ENCODE measurements at regions of chr7 and their contacts with region 1.

Region 1: DNA sequence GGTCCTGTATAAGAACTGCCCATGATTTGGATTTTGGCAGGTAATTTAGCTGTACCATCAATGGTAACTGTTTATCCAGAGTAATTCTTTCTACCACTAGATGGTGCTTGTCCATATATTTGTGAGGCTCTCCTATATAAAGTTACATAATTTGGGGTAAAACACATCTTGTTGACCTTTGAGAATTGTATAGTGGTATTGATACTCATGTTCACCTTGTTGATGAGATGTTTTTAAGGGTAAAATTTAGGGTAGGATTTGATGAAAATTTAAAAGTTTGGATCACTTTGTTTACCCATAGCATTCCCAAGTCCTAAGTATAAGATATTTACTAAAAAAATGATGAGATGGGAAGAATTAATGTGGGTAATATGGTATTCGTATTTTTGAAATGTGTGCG is 31.6 kb downstream of the ST7 start:
- DNase-seq: no peak
- ATAC-seq: peak; percentile 55; the same call in 1 of the 2 replicates
- H3K4me3 Mint-ChIP-seq: no peak overlapping the region
- H3K27ac Mint-ChIP-seq: no peak overlapping the region
- H3K4me1 Mint-ChIP-seq: 0 out of 2 replicates have a peak, but pooled peaks cover 3% of the 10 kb centered on the region
- H3K27me3 Mint-ChIP-seq: no peaks in the 10 kb centered on the region
- CTCF ChIP-seq: peak; percentile 42; the same call in 1 of the 2 replicates

Region 2: GRCh38 chr7:116971869-116972268 is 13.0 kb before region 1 on chr7:
- CTCF ChIA-PET with region 1: interaction called, 11 read pairs
- POLR2A ChIA-PET with region 1: interaction called, 3 read pairs
- DNase-seq: peak; percentile 21
- ATAC-seq: peak; percentile 61; the same call in 1 of the 2 replicates
- H3K4me3 Mint-ChIP-seq: no peak overlapping the region
- H3K27ac Mint-ChIP-seq: peak overlapping the region; percentile 76
- H3K4me1 Mint-ChIP-seq: peaks cover 55% of the 10 kb centered on the region
- H3K27me3 Mint-ChIP-seq: no peaks in the 10 kb centered on the region
- CTCF ChIP-seq: no peak

Region 3: DNA sequence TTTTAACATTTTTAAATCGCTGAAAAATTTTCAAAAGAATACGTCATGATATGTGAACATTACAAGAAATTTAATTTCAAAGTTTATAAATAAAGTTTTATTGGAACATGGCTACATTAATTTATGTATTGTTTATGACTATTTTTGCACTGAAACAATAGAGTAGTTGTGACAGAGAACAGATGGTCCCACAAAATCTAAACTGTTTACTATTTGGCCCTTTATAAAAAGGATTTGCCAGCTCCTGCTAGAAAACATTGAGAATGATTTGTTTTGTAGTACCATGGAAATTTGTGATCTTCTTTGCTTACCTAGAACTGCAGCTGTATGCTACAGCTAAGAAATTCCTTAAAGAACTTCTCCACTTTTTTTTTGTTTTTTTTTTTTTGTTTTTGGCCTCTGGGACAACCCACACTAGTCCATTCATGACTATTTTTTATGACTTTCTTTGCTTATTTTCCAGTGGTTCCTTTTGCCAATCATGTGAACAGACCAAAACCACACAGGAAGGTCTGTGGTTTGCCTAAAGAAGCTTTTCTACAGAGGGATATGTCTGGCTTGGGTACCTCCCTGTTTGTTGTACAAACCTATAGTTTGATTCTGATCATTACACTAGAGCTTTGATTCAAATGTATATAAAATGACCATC is 24.1 kb after region 1 on chr7:
- CTCF ChIA-PET with region 1: interaction called, 12 read pairs
- POLR2A ChIA-PET with region 1: no interaction called
- DNase-seq: no peak
- ATAC-seq: no peak
- H3K4me3 Mint-ChIP-seq: no peak overlapping the region
- H3K27ac Mint-ChIP-seq: no peak overlapping the region
- H3K4me1 Mint-ChIP-seq: peaks cover 11% of the 10 kb centered on the region
- H3K27me3 Mint-ChIP-seq: no peaks in the 10 kb centered on the region
- CTCF ChIP-seq: no peak

Region 4: GRCh38 chr7:117119192-117119924 is 134.4 kb after region 1 on chr7:
- CTCF ChIA-PET with region 1: interaction called, 20 read pairs
- POLR2A ChIA-PET with region 1: no interaction called
- DNase-seq: peak; percentile 85
- ATAC-seq: no peak
- H3K4me3 Mint-ChIP-seq: no peak overlapping the region
- H3K27ac Mint-ChIP-seq: no peak overlapping the region
- H3K4me1 Mint-ChIP-seq: peaks cover 30% of the 10 kb centered on the region
- H3K27me3 Mint-ChIP-seq: no peaks in the 10 kb centered on the region
- CTCF ChIP-seq: peak; percentile 70

Region 5: GRCh38 chr7:117127585-117128168 is 142.8 kb after region 1 on chr7:
- CTCF ChIA-PET with region 1: interaction called, 20 read pairs
- POLR2A ChIA-PET with region 1: no interaction called
- DNase-seq: peak; percentile 15
- ATAC-seq: no peak
- H3K4me3 Mint-ChIP-seq: no peak overlapping the region
- H3K27ac Mint-ChIP-seq: no peak overlapping the region
- H3K4me1 Mint-ChIP-seq: peaks cover 23% of the 10 kb centered on the region
- H3K27me3 Mint-ChIP-seq: no peaks in the 10 kb centered on the region
- CTCF ChIP-seq: peak; percentile 45; the same call in 1 of the 2 replicates

Measured in WTC11 (cell line).